Activated T-helper 2 cell treated with anti-CD3 and anti-CD28 coated beads, Interferon-gamma antibody, Interleukin-2, Interleukin-4, amounts not matched to agents 10 μg/mL and 5 μg/mL and 100 μg/mL, durations not matched to agents 14 hours and 24 hours and 36 hours (primary cell): ENCODE measurements at regions of chr7 and their contacts with region 1.

Region 1: DNA sequence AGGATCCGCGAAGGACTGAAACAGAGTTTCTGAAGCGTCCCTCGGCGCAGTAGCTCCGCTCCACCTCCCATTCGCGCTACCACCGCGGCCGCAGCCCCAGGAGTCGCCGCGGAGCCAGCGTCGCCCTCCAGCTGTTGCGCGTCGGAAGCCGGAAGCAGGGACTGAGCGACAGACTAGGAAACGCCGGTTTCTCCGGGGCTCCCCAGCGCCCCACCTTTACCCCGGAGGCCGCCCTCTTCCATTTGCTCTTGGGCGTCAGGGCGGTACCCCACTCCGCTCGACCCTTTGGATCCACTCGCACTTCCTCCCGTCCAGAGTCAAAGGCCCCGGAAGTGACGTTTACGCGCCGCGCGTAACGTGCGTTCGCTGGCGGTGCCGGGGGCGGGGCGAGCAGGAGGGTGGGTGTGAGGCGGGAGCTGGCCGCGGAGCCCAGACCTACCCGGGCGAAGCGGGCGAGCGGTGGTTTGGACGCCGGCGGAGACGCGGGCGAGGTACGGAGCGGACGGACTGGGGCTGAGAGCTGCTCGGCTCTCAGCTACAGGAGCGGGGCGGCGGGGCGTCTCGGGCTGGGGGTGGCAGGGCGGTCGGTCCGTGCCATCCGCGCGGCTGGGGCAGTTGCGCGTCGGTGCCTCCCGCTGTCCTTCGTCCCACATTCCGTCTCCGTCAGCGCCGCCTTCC is at the start of gene RABGEF1:
- DNase-seq: peak; percentile 95
- H3K4me3 Mint-ChIP-seq: peak within 1 kb of the TSS; percentile 94
- H3K27ac Mint-ChIP-seq: peak within 1 kb of the TSS; percentile 94
- H3K4me1 Mint-ChIP-seq: peaks cover 14% of the 10 kb centered on the region
- H3K27me3 Mint-ChIP-seq: no peaks in the 10 kb centered on the region
- total RNA-seq, gene RABGEF1: 24.5 and 26.3 TPM in 2 replicates

Region 2: GRCh38 chr7:66654123-66654732 is 86.2 kb before region 1 on chr7:
- intact Hi-C with region 1: loop called (anchors 1 kb)
- DNase-seq: peak; percentile 96
- H3K4me3 Mint-ChIP-seq: peak overlapping the region; percentile 95
- H3K27ac Mint-ChIP-seq: peak overlapping the region; percentile 94
- H3K4me1 Mint-ChIP-seq: peaks cover 14% of the 10 kb centered on the region
- H3K27me3 Mint-ChIP-seq: no peaks in the 10 kb centered on the region

Region 3: DNA sequence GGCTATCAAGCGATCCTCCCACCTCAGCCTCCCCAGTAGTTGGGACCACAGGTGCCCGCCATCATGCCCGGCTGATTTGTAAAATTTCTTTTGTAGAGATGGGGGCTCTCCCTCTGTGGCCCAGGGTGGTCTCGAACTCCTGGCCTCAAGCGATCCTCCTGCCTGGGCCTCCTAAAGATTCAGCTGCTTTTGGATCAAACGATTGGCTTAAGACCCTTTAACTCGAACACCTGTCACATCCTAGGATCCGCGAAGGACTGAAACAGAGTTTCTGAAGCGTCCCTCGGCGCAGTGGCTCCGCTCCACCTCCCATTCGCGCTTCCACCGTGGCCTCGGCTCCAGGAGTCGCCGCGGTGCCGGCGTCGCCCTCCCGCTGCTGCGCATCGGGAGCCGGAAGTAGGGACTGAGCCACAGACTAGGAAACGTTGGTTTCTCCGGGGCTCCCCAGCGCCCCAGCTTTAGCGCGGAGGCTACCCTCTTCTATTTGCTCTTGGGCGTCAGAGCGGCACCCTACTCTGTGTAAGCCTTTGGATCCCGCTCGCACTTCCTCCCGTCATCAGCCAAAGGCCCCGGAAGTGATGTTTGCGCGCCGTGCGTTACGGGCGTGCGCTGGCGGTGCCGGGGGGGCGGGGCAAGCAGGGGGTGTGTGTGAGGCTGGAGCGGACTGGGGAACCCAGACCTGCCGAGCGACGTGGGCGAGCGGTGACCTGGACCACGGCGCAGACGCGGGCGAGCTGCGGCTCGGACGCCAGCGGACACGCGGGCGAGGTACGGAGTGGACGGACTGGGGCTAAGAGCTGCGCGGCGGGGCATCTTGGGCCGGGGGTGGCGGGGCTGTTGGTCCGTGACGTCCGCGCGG is 58.7 kb before region 1 on chr7:
- intact Hi-C with region 1: loop called (anchors 1 kb)
- DNase-seq: peak; percentile 91
- H3K4me3 Mint-ChIP-seq: peak overlapping the region; percentile 90
- H3K27ac Mint-ChIP-seq: peak overlapping the region; percentile 93
- H3K4me1 Mint-ChIP-seq: peaks cover 15% of the 10 kb centered on the region
- H3K27me3 Mint-ChIP-seq: no peaks in the 10 kb centered on the region

Region 4: GRCh38 chr7:66720561-66720960 is 19.9 kb before region 1 on chr7:
- intact Hi-C with region 1: no loop called
- DNase-seq: no peak
- H3K4me3 Mint-ChIP-seq: no peak overlapping the region
- H3K27ac Mint-ChIP-seq: no peak overlapping the region
- H3K4me1 Mint-ChIP-seq: no peaks in the 10 kb centered on the region
- H3K27me3 Mint-ChIP-seq: no peaks in the 10 kb centered on the region

Region 5: DNA sequence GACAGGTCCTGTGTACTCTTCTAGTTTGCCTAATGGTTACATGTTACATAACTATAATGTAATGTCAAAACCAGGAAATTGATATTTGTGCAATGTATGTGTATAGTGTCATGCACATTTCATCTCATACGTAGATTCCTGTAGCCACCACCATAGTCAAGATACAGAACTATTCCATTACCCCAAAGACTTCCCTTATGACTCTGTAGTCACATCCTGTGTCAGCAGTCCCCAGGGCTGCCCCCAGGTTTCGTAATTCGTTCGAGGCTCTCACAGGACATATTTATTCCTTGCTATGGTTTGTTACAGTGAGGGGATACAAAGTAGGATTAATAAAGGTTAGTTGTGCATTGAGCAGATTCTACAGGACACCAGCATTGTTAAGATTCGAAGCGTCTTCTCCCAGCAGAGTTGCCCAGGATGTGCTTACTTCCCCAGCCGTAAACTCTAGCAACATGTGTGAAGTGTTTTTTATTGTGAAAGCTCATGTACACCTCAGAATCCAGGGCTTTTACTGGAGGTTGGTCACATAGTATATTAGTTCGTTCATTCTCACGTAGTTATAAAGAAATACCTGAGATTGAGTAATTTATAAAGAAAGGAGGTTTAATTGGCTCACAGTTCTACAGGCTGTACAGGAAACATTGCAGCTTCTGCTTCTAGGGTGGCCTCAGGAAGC is 18.6 kb after region 1 on chr7:
- intact Hi-C with region 1: loop called (anchors 2 kb)
- DNase-seq: no peak
- H3K4me3 Mint-ChIP-seq: no peak overlapping the region
- H3K27ac Mint-ChIP-seq: peak overlapping the region; percentile 73
- H3K4me1 Mint-ChIP-seq: peaks cover 21% of the 10 kb centered on the region
- H3K27me3 Mint-ChIP-seq: no peaks in the 10 kb centered on the region

Region 6: GRCh38 chr7:67377939-67378862 is 637.8 kb after region 1 on chr7:
- intact Hi-C with region 1: no loop called
- DNase-seq: peak; percentile 27
- H3K4me3 Mint-ChIP-seq: no peak overlapping the region
- H3K27ac Mint-ChIP-seq: no peak overlapping the region
- H3K4me1 Mint-ChIP-seq: no peaks in the 10 kb centered on the region
- H3K27me3 Mint-ChIP-seq: no peaks in the 10 kb centered on the region